ENCODE measurements at regions of chr12 and their contacts with region 1.

Region 1: GRCh38 chr12:24778486-24779304 is 170.2 kb downstream of the BCAT1 start:
- DNase-seq: peak; percentile 75
- ATAC-seq: peak; percentile 92
- H3K4me3 ChIP-seq: no peak overlapping the region
- H3K27ac ChIP-seq: no peak overlapping the region
- H3K4me1 ChIP-seq: peaks cover 4% of the 10 kb centered on the region; the same call in 1 of the 2 replicates
- H3K27me3 ChIP-seq: no peaks in the 10 kb centered on the region; the same call in 1 of the 2 replicates
- CTCF ChIP-seq: peak; percentile 62
- POLR2A ChIP-seq: no peak
- RAD21 ChIP-seq: peak; percentile 80

Region 2: GRCh38 chr12:23204933-23205778 is 1573.5 kb before region 1 on chr12:
- CTCF ChIA-PET with region 1: no interaction called
- POLR2A ChIA-PET with region 1: no interaction called
- dilution Hi-C with region 1: no loop called
- in situ Hi-C with region 1: loop called (anchors 5 kb)
- intact Hi-C with region 1: loop called (anchors 1 kb)
- DNase-seq: peak; percentile 67
- ATAC-seq: peak; percentile 93
- H3K4me3 ChIP-seq: no peak overlapping the region
- H3K27ac ChIP-seq: no peak overlapping the region
- H3K4me1 ChIP-seq: no peaks in the 10 kb centered on the region
- H3K27me3 ChIP-seq: no peaks in the 10 kb centered on the region
- CTCF ChIP-seq: peak; percentile 78
- POLR2A ChIP-seq: no peak
- RAD21 ChIP-seq: peak; percentile 80

Region 3: DNA sequence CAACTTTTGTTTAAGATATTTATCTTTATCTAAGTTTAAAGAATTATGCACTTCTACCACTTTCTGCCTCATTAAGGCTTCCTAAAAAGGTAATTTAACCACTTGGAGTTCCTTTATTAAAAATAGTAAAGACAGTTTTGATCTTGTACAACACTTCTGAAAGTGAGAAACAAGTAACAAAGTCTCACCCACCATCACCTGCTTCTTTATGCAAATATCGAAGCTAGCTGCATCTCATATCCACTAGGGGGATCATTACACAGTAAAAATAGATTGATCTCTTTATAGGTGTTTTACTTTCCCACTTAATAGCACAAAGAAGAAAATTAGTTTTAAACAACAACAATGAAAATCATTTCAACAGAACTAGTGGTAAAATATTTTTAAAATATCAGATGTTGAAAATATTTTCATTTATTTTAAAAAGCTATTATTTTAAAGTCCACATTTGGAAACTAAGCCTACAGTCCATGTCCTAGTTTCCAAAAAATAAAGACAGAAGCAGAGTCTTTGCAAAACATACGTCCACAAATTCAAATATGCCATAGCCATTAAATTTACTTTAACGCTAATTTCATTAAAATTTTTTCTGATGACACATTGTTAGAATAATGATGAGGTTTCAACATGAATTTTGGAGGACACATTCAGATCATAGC is 669.2 kb before region 1 on chr12:
- CTCF ChIA-PET with region 1: no interaction called
- POLR2A ChIA-PET with region 1: no interaction called
- dilution Hi-C with region 1: no loop called
- in situ Hi-C with region 1: no loop called
- intact Hi-C with region 1: loop called (anchors 5 kb)
- DNase-seq: peak; percentile 32
- ATAC-seq: peak; percentile 42; the same call in 1 of the 2 replicates
- H3K4me3 ChIP-seq: no peak overlapping the region
- H3K27ac ChIP-seq: no peak overlapping the region
- H3K4me1 ChIP-seq: peaks cover 2% of the 10 kb centered on the region; the same call in 1 of the 2 replicates
- H3K27me3 ChIP-seq: no peaks in the 10 kb centered on the region
- CTCF ChIP-seq: peak; percentile 57
- POLR2A ChIP-seq: no peak
- RAD21 ChIP-seq: peak; percentile 54

Region 4: DNA sequence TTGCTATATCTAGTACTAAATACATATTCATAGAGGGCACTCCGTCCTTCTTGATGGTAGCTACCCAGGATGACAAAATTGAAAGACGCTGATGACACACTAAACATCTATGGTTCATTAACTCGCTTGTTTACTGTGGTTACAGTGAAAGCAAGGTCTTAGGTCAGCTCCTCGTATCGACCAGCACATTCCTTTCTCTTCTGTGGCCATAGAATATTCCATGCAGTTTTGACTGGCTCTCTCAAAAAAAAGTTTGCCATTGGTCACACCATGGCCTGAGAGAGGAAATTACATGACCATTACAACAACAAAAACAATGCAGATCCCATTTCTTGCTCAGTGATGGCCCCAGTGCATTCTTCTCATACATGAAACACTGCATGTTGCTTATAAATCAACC is 417.8 kb before region 1 on chr12:
- CTCF ChIA-PET with region 1: no interaction called
- POLR2A ChIA-PET with region 1: no interaction called
- dilution Hi-C with region 1: no loop called
- in situ Hi-C with region 1: no loop called
- intact Hi-C with region 1: loop called (anchors 5 kb)
- DNase-seq: peak; percentile 19
- ATAC-seq: peak; percentile 58
- H3K4me3 ChIP-seq: no peak overlapping the region
- H3K27ac ChIP-seq: no peak overlapping the region
- H3K4me1 ChIP-seq: peaks cover 6% of the 10 kb centered on the region
- H3K27me3 ChIP-seq: no peaks in the 10 kb centered on the region
- CTCF ChIP-seq: no peak
- POLR2A ChIP-seq: no peak
- RAD21 ChIP-seq: no peak

Region 5: GRCh38 chr12:24728366-24728765 is 50.3 kb before region 1 on chr12:
- CTCF ChIA-PET with region 1: interaction called, 4 read pairs
- POLR2A ChIA-PET with region 1: no interaction called
- dilution Hi-C with region 1: no loop called
- in situ Hi-C with region 1: no loop called
- intact Hi-C with region 1: loop called (anchors 2 kb)
- DNase-seq: peak; percentile 55
- ATAC-seq: peak; percentile 74
- H3K4me3 ChIP-seq: no peak overlapping the region
- H3K27ac ChIP-seq: no peak overlapping the region
- H3K4me1 ChIP-seq: no peaks in the 10 kb centered on the region; the same call in 1 of the 2 replicates
- H3K27me3 ChIP-seq: no peaks in the 10 kb centered on the region
- CTCF ChIP-seq: peak; percentile 71
- POLR2A ChIP-seq: no peak
- RAD21 ChIP-seq: peak; percentile 78